ENCODE measurements at regions of chr17 and their contacts with region 1.

Region 1: DNA sequence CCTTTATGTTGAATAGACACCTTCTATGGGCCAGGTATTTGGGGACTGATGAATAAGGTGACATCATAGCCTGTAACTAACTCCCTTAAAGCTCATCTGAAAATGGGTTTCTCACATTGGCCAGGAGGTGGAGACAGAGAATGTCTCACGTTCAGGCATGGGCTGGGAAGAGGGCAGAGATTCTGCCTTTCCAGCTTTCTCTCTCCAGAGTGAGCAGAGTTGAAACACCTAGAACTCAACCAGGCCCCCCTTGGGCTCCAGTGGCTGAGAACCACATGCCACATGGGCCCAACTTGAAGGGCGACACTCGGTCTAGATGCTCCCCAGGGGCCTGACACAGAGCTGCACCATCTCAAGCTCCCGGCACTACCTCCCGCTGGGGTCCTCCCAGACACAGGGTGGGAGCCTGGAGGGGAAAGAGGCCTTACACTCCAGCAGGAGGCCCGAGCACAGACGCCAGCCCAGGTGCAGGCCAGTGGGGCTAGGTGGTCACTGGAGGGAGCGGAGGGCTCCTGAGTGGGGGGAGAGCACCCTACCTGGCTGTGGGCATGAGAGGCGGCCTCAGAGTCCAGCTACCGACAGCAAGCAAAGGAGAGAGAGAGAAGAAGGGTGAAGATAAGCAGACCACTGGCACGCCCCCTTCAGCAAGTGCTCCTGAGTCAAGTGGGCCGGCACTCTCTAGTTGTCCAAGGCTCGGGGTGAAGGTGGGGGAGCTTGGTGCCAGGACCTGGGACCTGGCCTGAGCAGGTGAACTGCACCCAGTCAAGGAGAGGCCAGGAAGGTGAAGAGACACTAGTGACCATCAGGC is 55.9 kb downstream of the MYO18A start:
- DNase-seq: peak; percentile 62

Region 2: GRCh38 chr17:29031488-29031887 is 92.8 kb before region 1 on chr17:
- CTCF ChIA-PET with region 1: no interaction called
- POLR2A ChIA-PET with region 1: no interaction called
- DNase-seq: no peak

Region 3: GRCh38 chr17:29059281-29059680 is 65.0 kb before region 1 on chr17:
- CTCF ChIA-PET with region 1: no interaction called
- POLR2A ChIA-PET with region 1: no interaction called
- DNase-seq: no peak

Region 4: GRCh38 chr17:29140051-29140621 is 15.8 kb after region 1 on chr17:
- CTCF ChIA-PET with region 1: interaction called, 20 read pairs
- POLR2A ChIA-PET with region 1: interaction called, 10 read pairs
- DNase-seq: peak; percentile 62